ENCODE measurements at regions of chr18 and their contacts with region 1.

Region 1: DNA sequence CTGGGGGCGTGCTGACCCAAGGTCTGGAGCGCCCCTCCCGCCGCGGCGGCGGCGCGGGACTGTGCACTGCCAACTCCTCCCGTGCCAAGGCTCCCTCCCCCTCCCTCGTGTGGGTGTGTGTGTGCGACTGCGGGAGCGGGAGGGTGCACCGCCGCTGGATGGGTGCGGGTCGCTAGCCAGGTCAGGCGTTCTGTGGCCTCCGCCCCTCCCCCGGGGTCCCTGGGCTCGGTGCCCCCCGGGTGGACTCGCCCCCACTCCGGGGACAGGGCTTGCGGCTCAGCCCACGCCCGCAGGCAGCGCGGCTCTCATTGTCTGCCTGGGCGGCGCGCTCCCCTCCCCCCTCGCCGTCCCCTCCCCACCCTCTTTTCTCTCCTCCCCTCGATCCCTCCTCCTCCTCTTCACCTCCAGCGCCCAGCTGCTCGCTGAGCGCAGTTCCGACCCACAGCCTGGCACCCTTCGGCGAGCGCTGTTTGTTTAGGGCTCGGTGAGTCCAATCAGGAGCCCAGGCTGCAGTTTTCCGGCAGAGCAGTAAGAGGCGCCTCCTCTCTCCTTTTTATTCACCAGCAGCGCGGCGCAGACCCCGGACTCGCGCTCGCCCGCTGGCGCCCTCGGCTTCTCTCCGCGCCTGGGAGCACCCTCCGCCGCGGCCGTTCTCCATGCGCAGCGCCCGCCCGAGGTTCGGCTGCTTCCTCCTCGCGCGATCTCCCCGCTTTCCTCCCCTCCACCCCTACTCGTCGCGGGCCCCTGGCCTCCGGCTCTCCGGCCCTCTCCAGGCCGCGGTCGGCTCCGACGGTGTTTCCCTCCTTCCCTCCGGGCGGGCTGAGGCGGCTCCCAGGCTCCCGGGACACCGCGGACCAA is at the start of gene GATA6:
- DNase-seq: peak; percentile 93 to 95
- H3K4me3 ChIP-seq: peak within 1 kb of the TSS; percentile 89 to 96
- H3K27ac ChIP-seq: peak within 1 kb of the TSS; percentile 99 to 100
- H3K4me1 ChIP-seq: no peaks in the 10 kb centered on the region
- H3K27me3 ChIP-seq: no peaks in the 10 kb centered on the region
- CTCF ChIP-seq: peak; percentile 27 to 64 (median 60)
- POLR2A ChIP-seq: peak; percentile 81 to 90
- total RNA-seq, gene GATA6: 28.2 to 59.6 (median 39.5) TPM

Region 2: DNA sequence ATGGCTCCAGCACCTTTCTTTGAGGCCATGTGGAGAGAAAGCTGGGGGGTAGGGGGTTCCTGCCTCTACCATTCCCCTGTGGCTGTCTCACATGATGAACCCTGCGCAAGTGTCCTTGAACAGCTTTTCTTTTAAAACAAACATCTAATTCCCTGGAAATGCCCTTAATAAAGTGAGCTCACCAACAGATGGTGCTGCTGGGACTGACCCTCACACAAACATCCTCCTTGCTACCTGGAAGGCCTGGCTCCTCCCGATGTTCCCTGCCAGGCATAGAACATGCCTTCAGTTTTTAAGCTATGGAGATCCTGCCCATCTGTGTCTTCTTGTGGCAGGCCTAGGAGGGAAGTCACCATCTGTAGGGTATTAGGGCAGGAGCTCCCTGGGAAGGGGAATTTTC is 60.6 kb before region 1 on chr18:
- intact Hi-C with region 1: no loop called
- DNase-seq: no peak
- H3K4me3 ChIP-seq: no peak overlapping the region
- H3K27ac ChIP-seq: no peak overlapping the region
- H3K4me1 ChIP-seq: no peaks in the 10 kb centered on the region
- H3K27me3 ChIP-seq: no peaks in the 10 kb centered on the region
- CTCF ChIP-seq: peak in 1 of 4 experiments; percentile 11
- POLR2A ChIP-seq: no peak

Region 3: DNA sequence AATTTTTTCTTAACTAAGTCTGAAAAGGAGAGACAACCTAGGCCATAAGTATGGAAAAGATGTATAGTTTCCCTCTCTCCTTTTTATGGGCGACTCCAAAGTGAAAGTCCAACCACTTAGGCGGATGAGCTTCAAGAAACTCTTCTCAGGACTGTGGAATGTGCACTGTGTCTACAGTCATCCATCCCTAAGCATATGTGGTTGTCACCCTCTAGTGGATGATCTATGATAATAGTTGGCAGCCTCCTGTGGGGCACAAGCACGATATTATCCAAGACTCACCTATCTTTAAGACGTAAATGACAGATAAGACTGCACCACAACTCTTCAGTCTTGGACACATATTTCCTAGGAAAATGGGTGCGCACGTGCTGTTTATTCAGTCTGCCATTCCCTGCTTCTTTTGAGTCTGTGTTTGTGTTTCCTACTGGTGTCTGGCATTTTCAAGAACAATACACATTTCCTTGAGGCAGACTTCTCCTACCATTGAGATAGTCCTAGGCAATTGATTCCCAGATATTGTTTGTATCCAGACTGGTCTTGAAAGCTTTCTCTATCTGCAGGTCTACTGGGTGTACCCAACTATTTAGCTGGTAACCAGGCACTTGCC is 394.0 kb after region 1 on chr18:
- intact Hi-C with region 1: loop called (anchors 10 kb)
- DNase-seq: peak in 1 of 2 donors; percentile 66
- H3K4me3 ChIP-seq: no peak overlapping the region
- H3K27ac ChIP-seq: peak overlapping the region; percentile 10 to 30
- H3K4me1 ChIP-seq: peaks cover 0 to 4% of the 10 kb centered on the region in 2 donors
- H3K27me3 ChIP-seq: no peaks in the 10 kb centered on the region
- CTCF ChIP-seq: peak; percentile 72 to 88 (median 80)
- POLR2A ChIP-seq: no peak